GM12878 (cell line): ENCODE measurements at regions of chr14 and their contacts with region 1.

Region 1: GRCh38 chr14:34012978-34013720 is 62.3 kb upstream of the EGLN3 start:
- DNase-seq: peak; percentile 76
- ATAC-seq: peak; percentile 86
- H3K4me3 ChIP-seq: peak overlapping the region; percentile 41; the same call in 1 of the 2 replicates
- H3K27ac ChIP-seq: peak overlapping the region; percentile 70
- H3K4me1 ChIP-seq: peaks cover 18% of the 10 kb centered on the region
- H3K27me3 ChIP-seq: no peaks in the 10 kb centered on the region
- CTCF ChIP-seq: no peak
- EP300 ChIP-seq: no peak
- POLR2A ChIP-seq: no peak
- RAD21 ChIP-seq: no peak

Region 2: GRCh38 chr14:33938131-33938949 is 74.8 kb before region 1 on chr14:
- CTCF ChIA-PET with region 1: interaction called, 6 read pairs
- POLR2A ChIA-PET with region 1: interaction called, 3 read pairs
- RAD21 ChIA-PET with region 1: interaction called, 12 read pairs
- SMC1A ChIA-PET with region 1: interaction called, 57 read pairs
- in situ Hi-C with region 1: no loop called
- intact Hi-C with region 1: no loop called
- DNase-seq: peak; percentile 36
- ATAC-seq: no peak
- H3K4me3 ChIP-seq: no peak overlapping the region; the same call in 1 of the 2 replicates
- H3K27ac ChIP-seq: no peak overlapping the region
- H3K4me1 ChIP-seq: no peaks in the 10 kb centered on the region
- H3K27me3 ChIP-seq: no peaks in the 10 kb centered on the region
- CTCF ChIP-seq: no peak
- EP300 ChIP-seq: no peak
- POLR2A ChIP-seq: no peak
- RAD21 ChIP-seq: no peak

Region 3: DNA sequence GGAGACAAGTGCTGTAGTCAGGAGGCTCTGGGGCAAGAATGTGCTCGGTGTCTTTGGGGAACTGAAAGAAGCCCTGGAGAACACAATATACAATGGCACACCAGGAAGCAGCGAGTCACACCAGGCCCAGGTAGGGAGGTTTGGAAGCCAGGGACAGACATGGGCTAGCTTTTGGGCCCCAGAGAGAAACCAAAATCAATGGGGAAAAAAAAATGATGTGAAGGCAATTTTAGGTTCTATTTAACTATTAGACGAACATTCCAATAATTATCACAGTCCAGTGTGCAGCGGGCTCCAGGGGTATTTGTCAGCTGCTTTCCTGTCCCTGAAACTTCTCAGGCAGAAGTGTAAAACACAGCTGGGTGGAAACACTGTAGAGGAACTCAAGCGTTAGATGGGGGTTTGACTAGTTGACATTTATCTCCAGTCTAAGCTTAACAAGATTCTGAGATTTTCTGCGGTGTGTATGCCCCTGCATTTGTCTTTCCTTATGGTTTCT is 40.5 kb before region 1 on chr14:
- CTCF ChIA-PET with region 1: interaction called, 3 read pairs
- POLR2A ChIA-PET with region 1: interaction called, 5 read pairs
- RAD21 ChIA-PET with region 1: interaction called, 6 read pairs
- SMC1A ChIA-PET with region 1: interaction called, 47 read pairs
- in situ Hi-C with region 1: no loop called
- intact Hi-C with region 1: loop called (anchors 5 kb)
- DNase-seq: peak; percentile 61
- ATAC-seq: peak; percentile 98
- H3K4me3 ChIP-seq: 0 out of 2 replicates have a peak overlapping the region, but pooled peaks have one; percentile 24
- H3K27ac ChIP-seq: peak overlapping the region; percentile 68
- H3K4me1 ChIP-seq: peaks cover 15% of the 10 kb centered on the region
- H3K27me3 ChIP-seq: no peaks in the 10 kb centered on the region
- CTCF ChIP-seq: no peak
- EP300 ChIP-seq: peak; percentile 20 to 43; a peak in 2 of 4 replicates
- POLR2A ChIP-seq: no peak
- RAD21 ChIP-seq: no peak

Region 4: DNA sequence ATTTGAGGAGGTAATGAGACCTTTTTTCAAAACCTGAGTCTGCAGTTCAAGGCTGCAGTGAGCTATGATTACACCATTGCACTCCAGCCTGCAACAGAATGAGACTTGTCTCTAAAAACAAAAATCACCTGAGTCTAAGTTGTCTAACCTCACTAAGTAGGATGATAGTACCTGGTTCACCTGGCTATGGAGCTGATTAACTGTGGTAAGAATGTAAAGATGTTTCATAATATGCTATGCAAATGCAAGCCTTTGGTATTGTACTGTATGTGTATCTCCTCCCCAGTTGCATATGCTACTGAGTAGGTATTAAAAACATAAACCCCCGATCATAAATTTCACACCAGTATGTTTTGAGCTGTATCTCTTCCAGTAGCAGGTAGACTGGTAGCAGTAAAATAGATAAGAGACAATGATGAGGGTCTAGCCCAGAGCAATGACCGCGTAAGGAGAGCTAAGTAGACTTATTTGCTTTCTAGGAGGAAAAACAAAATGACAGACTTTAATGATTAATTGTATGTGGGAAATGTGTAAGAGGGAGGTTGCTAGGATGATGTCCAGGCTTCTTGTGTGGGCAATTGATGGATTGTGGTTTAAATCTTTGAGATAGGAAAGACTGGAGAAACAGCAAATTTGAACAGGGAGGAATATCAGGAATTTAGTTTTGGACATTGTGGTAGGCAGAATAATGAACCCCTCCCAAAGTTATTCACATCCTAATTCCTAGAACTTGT is 20.7 kb before region 1 on chr14:
- CTCF ChIA-PET with region 1: interaction called, 3 read pairs
- POLR2A ChIA-PET with region 1: interaction called, 3 read pairs
- RAD21 ChIA-PET with region 1: interaction called, 5 read pairs
- SMC1A ChIA-PET with region 1: interaction called, 132 read pairs
- in situ Hi-C with region 1: no loop called
- intact Hi-C with region 1: no loop called
- DNase-seq: no peak
- ATAC-seq: no peak
- H3K4me3 ChIP-seq: no peak overlapping the region
- H3K27ac ChIP-seq: no peak overlapping the region
- H3K4me1 ChIP-seq: no peaks in the 10 kb centered on the region
- H3K27me3 ChIP-seq: no peaks in the 10 kb centered on the region
- CTCF ChIP-seq: no peak
- EP300 ChIP-seq: no peak
- POLR2A ChIP-seq: no peak
- RAD21 ChIP-seq: no peak

Region 5: DNA sequence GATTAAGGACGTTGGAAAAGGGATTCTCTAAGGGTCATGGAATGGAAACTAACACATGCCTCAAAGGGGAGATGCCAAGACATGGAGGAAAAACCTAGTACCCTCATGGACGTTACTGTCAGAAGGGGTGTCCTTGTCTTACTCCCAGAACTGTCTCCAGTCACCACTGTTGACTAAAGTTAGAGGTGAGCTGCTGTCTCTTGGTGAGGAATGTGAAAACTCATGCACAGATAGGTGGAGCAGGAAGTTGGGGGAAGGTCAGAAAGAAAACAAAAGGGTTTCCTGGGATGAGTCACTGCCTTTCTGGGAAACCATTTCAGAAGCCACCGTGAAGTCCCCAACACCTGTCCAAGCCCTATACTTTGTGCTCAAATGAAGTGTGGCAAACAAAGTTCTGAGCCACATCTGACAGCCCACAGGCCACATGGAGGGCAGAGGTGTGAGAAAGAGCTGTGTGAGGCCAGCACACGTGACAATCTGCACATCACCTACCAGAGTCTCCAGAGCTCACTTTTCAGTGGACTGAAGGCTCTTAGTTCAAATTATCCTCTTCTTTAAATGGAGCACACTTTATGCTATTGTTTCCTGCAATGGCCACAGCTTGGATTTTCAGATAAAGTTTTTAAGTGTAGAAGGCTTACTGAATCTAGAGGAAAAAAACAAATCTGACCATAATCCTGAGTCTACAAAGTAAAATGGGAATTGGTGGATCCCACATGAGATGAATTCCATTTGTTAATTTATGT is 30.7 kb after region 1 on chr14:
- CTCF ChIA-PET with region 1: interaction called, 5 read pairs
- POLR2A ChIA-PET with region 1: interaction called, 4 read pairs
- RAD21 ChIA-PET with region 1: interaction called, 23 read pairs
- SMC1A ChIA-PET with region 1: interaction called, 56 read pairs
- in situ Hi-C with region 1: no loop called
- intact Hi-C with region 1: no loop called
- DNase-seq: peak; percentile 97
- ATAC-seq: peak; percentile 97
- H3K4me3 ChIP-seq: peak overlapping the region; percentile 21; the same call in 1 of the 2 replicates
- H3K27ac ChIP-seq: 0 out of 2 replicates have a peak overlapping the region, but pooled peaks have one; percentile 22
- H3K4me1 ChIP-seq: peaks cover 36% of the 10 kb centered on the region
- H3K27me3 ChIP-seq: no peaks in the 10 kb centered on the region
- CTCF ChIP-seq: no peak
- EP300 ChIP-seq: peak; percentile 89 to 92
- POLR2A ChIP-seq: no peak
- RAD21 ChIP-seq: no peak

Region 6: GRCh38 chr14:34059855-34060638 is 46.9 kb after region 1 on chr14:
- CTCF ChIA-PET with region 1: interaction called, 10 read pairs
- POLR2A ChIA-PET with region 1: interaction called, 7 read pairs
- RAD21 ChIA-PET with region 1: interaction called, 16 read pairs
- SMC1A ChIA-PET with region 1: interaction called, 22 read pairs
- in situ Hi-C with region 1: no loop called
- intact Hi-C with region 1: no loop called
- DNase-seq: no peak
- ATAC-seq: peak; percentile 91
- H3K4me3 ChIP-seq: peak overlapping the region; percentile 57; the same call in 1 of the 2 replicates
- H3K27ac ChIP-seq: peak overlapping the region; percentile 52; the same call in 1 of the 2 replicates
- H3K4me1 ChIP-seq: peaks cover 20% of the 10 kb centered on the region
- H3K27me3 ChIP-seq: no peaks in the 10 kb centered on the region
- CTCF ChIP-seq: peak in 2 of 3 experiments; percentile 25 to 39; a peak in 3 of 6 replicates
- EP300 ChIP-seq: 0 out of 4 replicates have a peak, but pooled peaks of 1 of the 2 experiments have one; percentile 42
- POLR2A ChIP-seq: peak; percentile 83
- RAD21 ChIP-seq: 0 out of 2 replicates have a peak, but pooled peaks have one; percentile 6